Mucosa of descending colon (tissue), 3 donors: ENCODE measurements at regions of chr2 and their contacts with region 1.

Region 1: GRCh38 chr2:218257390-218257981 is 3.3 kb upstream of the GPBAR1 start:
- DNase-seq: no peak
- ATAC-seq: peak; percentile 32
- H3K4me3 ChIP-seq: no peak overlapping the region
- H3K4me1 ChIP-seq: peaks cover 20% of the 10 kb centered on the region
- CTCF ChIP-seq: no peak

Region 2: GRCh38 chr2:218186355-218186766 is 71.1 kb before region 1 on chr2:
- intact Hi-C with region 1: loop called (anchors 10 kb)
- DNase-seq: peak; percentile 57 to 88 (median 76)
- ATAC-seq: peak; percentile 98
- H3K4me3 ChIP-seq: no peak overlapping the region
- H3K4me1 ChIP-seq: peaks cover 7% of the 10 kb centered on the region
- CTCF ChIP-seq: peak; percentile 82